ENCODE measurements at regions of chr14 and their contacts with region 1.

Region 1: DNA sequence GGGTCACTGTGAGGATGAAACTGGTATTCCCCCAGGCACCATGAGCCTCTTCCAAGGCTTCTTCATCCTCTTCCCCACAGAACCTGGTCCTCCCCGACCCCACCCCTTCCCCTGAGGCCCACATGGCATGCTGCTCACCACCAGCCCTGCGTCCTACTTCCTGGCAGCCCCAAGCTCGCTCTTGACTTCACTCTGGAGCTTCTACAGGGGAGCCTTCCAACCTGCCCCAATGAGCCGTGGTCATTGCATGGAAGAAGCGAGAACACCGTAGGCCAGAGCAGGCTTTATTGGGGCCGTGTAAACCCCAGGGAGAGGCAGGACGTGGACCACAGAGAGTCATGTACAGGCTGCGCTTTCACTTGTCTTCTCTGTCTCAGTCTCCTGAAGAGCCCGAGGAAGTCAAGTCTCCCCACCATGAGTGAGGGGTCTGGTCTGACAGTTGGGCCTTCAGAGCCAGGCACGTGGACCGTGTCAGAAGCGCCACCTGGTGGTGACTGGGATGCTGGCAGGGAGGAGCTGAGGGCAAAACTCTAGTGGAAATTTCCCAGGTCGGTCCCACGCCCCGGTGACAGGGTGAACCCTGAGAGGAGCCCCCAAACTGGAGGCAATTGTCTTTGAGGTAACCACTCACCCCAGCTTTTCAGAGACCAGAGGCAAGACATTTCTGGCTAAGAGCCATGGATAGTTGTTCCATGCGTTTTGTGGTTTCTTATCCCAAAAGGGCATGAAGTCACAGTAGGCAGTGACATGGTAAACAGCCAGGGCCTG is 17.5 kb downstream of the RPS6KL1 start:
- DNase-seq: peak; percentile 61 to 76 (median 72)
- ATAC-seq: peak; percentile 62
- H3K4me3 ChIP-seq: no peak overlapping the region
- H3K27ac ChIP-seq: no peak overlapping the region
- H3K4me1 ChIP-seq: peaks cover 7% of the 10 kb centered on the region
- H3K27me3 ChIP-seq: no peaks in the 10 kb centered on the region
- CTCF ChIP-seq: peak; percentile 74 to 92 (median 90)
- POLR2A ChIP-seq: peak in 1 of 3 donors; percentile 9

Region 2: GRCh38 chr14:74860906-74861733 is 44.4 kb before region 1 on chr14:
- intact Hi-C with region 1: loop called (anchors 5 kb)
- DNase-seq: peak; percentile 90 to 96 (median 91)
- ATAC-seq: peak; percentile 82
- H3K4me3 ChIP-seq: no peak overlapping the region
- H3K27ac ChIP-seq: no peak overlapping the region
- H3K4me1 ChIP-seq: no peaks in the 10 kb centered on the region
- H3K27me3 ChIP-seq: no peaks in the 10 kb centered on the region
- CTCF ChIP-seq: peak; percentile 76 to 86 (median 82)
- POLR2A ChIP-seq: no peak

Region 3: GRCh38 chr14:75050852-75051554 is 145.4 kb after region 1 on chr14 and contains the start of gene MLH3:
- intact Hi-C with region 1: no loop called
- DNase-seq: peak; percentile 82 to 88 (median 84)
- ATAC-seq: peak; percentile 87
- H3K4me3 ChIP-seq: peak within 1 kb of the TSS; percentile 48 to 73
- H3K27ac ChIP-seq: peak within 1 kb of the TSS; percentile 71 to 95 (median 92)
- H3K4me1 ChIP-seq: peaks cover 18% of the 10 kb centered on the region
- H3K27me3 ChIP-seq: no peaks in the 10 kb centered on the region
- CTCF ChIP-seq: peak in 1 of 7 experiments; percentile 11
- POLR2A ChIP-seq: peak; percentile 37 to 76 (median 75)
- total RNA-seq, gene MLH3: 18.2 to 23.7 TPM